Right lobe of liver (tissue), 6 donors: ENCODE measurements at regions of chr19 and their contacts with region 1.

Region 1: GRCh38 chr19:768424-768823 is 17.5 kb downstream of the MISP start:
- DNase-seq: no peak
- ATAC-seq: no peak
- H3K4me3 ChIP-seq: no peak overlapping the region
- H3K27ac ChIP-seq: no peak overlapping the region
- H3K4me1 ChIP-seq: no peaks in the 10 kb centered on the region
- H3K27me3 ChIP-seq: no peaks in the 10 kb centered on the region
- CTCF ChIP-seq: no peak
- POLR2A ChIP-seq: no peak

Region 2: DNA sequence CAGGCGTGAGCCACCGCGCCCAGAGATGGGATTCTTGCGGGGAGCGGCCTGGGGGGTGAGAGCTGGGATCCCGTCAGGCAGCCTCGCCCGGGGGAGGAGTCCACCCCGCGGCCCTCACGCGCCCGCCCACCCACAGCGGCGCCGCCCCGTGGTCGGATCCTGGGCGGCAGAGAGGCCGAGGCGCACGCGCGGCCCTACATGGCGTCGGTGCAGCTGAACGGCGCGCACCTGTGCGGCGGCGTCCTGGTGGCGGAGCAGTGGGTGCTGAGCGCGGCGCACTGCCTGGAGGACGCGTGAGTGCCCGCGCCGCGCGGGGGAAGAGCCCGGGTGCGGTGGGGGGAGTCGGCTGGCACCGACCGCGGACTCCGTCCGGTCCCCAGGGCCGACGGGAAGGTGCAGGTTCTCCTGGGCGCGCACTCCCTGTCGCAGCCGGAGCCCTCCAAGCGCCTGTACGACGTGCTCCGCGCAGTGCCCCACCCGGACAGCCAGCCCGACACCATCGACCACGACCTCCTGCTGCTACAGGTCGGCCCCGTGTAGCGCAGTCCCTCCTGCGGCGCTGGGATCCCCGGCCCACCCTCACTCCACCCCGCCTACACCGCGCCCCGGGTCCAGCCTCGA is 92.2 kb after region 1 on chr19:
- intact Hi-C with region 1: loop called in 1 of 2 experiments (anchors 10 kb)
- DNase-seq: peak in 1 of 3 donors; percentile 43
- ATAC-seq: peak; percentile 17 to 39 (median 30)
- H3K4me3 ChIP-seq: peak overlapping the region in 2 of 3 donors; percentile 23 to 24
- H3K27ac ChIP-seq: no peak overlapping the region
- H3K4me1 ChIP-seq: no peaks in the 10 kb centered on the region
- H3K27me3 ChIP-seq: no peaks in the 10 kb centered on the region
- CTCF ChIP-seq: peak in 2 of 4 donors; percentile 10 to 11
- POLR2A ChIP-seq: no peak

Region 3: GRCh38 chr19:984165-984967 is 215.9 kb after region 1 on chr19 and contains the start of gene WDR18:
- intact Hi-C with region 1: loop called in 1 of 2 experiments (anchors 10 kb)
- DNase-seq: peak; percentile 95 to 97 (median 96)
- ATAC-seq: peak; percentile 83 to 90 (median 86)
- H3K4me3 ChIP-seq: peak within 1 kb of the TSS; percentile 64 to 97 (median 95)
- H3K27ac ChIP-seq: peak within 1 kb of the TSS; percentile 67 to 86 (median 77)
- H3K4me1 ChIP-seq: peaks cover 0 to 30% (median 13%) of the 10 kb centered on the region in 4 donors
- H3K27me3 ChIP-seq: no peaks in the 10 kb centered on the region
- CTCF ChIP-seq: peak in 3 of 4 donors; percentile 22 to 37 (median 28)
- POLR2A ChIP-seq: peak; percentile 81
- total RNA-seq, gene WDR18: 19.0 to 56.2 (median 29.7) TPM